ENCODE measurements at regions of chr12 and their contacts with region 1.

Region 1: GRCh38 chr12:2944401-2945047 is 14.7 kb upstream of the TEAD4 start:
- DNase-seq: peak; percentile 52 to 66
- ATAC-seq: peak; percentile 91
- H3K4me3 ChIP-seq: peak overlapping the region; percentile 42
- H3K27ac ChIP-seq: peak overlapping the region; percentile 46 to 75
- H3K4me1 ChIP-seq: no peaks in the 10 kb centered on the region
- CTCF ChIP-seq: peak; percentile 79
- EP300 ChIP-seq: no peak
- POLR2A ChIP-seq: no peak
- RAD21 ChIP-seq: peak; percentile 76 to 90

Region 2: GRCh38 chr12:2853626-2854025 is 90.9 kb before region 1 on chr12:
- CTCF ChIA-PET with region 1: interaction called, 15 read pairs
- POLR2A ChIA-PET with region 1: no interaction called
- DNase-seq: peak; percentile 77 to 92
- ATAC-seq: peak; percentile 70 to 86; a peak in 5 of 6 replicates
- H3K4me3 ChIP-seq: no peak overlapping the region
- H3K27ac ChIP-seq: no peak overlapping the region
- H3K4me1 ChIP-seq: peaks cover 11% of the 10 kb centered on the region
- CTCF ChIP-seq: peak; percentile 55
- EP300 ChIP-seq: no peak
- POLR2A ChIP-seq: no peak
- RAD21 ChIP-seq: peak in 1 of 2 experiments; percentile 45; a peak in 1 of 5 replicates

Region 3: DNA sequence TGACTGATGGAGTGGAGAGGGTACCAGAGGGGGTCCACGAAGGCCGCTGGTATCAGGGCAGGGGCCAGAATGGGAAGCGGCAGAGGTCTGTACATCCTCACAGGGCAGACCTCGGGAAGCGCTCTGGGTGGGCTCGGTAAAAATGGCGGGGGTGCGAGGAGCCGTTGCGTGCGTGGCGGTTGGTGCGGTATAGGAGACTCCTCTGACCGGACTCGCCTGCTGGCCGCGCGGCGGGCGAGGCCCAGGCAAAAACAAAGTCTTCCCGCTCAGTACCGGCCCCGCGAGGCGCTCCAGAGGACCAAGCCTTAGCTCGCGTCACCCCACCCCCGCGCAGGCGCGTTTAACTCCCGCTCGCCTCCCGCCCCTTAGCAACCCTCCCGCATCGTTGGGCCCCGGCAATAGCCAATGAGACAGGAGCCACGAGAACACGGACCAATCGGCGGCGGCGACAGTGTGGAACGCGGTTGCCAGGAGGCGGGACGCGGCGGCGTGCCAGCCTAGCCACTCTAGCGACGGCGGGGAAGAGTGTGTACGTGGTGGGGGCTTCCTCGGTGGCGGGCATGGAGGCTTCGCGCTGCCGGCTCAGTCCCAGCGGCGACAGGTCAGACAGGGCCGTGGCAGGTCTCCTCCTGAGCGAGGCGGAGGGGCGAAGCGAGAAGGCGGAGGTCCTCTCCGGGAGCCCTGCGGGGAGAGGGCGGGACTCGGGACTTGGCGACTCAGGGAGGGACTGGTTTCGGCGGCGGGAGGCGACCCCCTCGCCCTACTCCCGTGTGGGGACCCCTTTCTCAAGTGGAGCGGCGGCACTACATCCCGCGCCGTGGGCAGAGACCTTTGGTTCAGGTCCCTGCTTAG is 53.9 kb before region 1 on chr12 and contains the start of gene TULP3:
- CTCF ChIA-PET with region 1: interaction called, 70 read pairs
- POLR2A ChIA-PET with region 1: no interaction called
- DNase-seq: peak; percentile 96 to 98
- ATAC-seq: peak; percentile 95 to 96
- H3K4me3 ChIP-seq: peak within 1 kb of the TSS; percentile 86
- H3K27ac ChIP-seq: peak within 1 kb of the TSS; percentile 87 to 89
- H3K4me1 ChIP-seq: peaks cover 28% of the 10 kb centered on the region
- CTCF ChIP-seq: no peak
- EP300 ChIP-seq: no peak
- POLR2A ChIP-seq: peak; percentile 75
- RAD21 ChIP-seq: no peak
- polyA plus RNA-seq, gene TULP3: 30.6 and 32.9 TPM in 2 replicates

Region 4: GRCh38 chr12:2930865-2931264 is 13.7 kb before region 1 on chr12:
- CTCF ChIA-PET with region 1: interaction called, 13 read pairs
- POLR2A ChIA-PET with region 1: no interaction called
- DNase-seq: no peak
- ATAC-seq: no peak
- H3K4me3 ChIP-seq: no peak overlapping the region
- H3K27ac ChIP-seq: no peak overlapping the region
- H3K4me1 ChIP-seq: no peaks in the 10 kb centered on the region
- CTCF ChIP-seq: no peak
- EP300 ChIP-seq: no peak
- POLR2A ChIP-seq: no peak
- RAD21 ChIP-seq: no peak

Region 5: DNA sequence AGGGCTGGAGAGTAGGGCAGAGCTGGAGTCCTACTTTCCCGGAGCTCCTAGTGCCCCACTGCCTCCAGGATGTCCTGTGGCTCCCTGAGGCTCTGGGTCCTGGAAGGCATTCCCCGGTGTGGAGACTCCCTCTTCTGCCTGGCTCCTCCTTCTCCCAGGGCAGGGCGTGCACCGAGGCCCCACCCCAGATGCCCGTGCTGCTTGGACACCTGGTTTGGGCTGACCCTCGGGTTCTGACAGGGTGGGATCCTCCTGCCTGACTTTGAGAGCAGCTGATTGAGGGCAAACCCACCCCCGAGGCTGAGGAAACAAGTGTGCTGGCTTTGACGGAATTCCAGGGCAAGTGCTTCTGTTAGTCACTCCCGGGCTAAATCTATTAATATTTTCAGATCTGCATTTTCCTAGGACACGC is 30.0 kb after region 1 on chr12:
- CTCF ChIA-PET with region 1: interaction called, 12 read pairs
- POLR2A ChIA-PET with region 1: no interaction called
- DNase-seq: no peak
- ATAC-seq: peak; percentile 38 to 77; a peak in 4 of 6 replicates
- H3K4me3 ChIP-seq: no peak overlapping the region
- H3K27ac ChIP-seq: no peak overlapping the region
- H3K4me1 ChIP-seq: peaks cover 5% of the 10 kb centered on the region; the same call in 1 of the 3 replicates
- CTCF ChIP-seq: no peak
- EP300 ChIP-seq: no peak
- POLR2A ChIP-seq: no peak
- RAD21 ChIP-seq: no peak